PC-9 (cell line): ENCODE measurements at regions of chr10 and their contacts with region 1.

Region 1: GRCh38 chr10:44116474-44116873 is 268.4 kb downstream of the CXCL12 start:
- DNase-seq: no peak
- H3K4me3 ChIP-seq: no peak overlapping the region
- H3K27ac ChIP-seq: no peak overlapping the region
- H3K4me1 ChIP-seq: no peaks in the 10 kb centered on the region
- H3K27me3 ChIP-seq: no peaks in the 10 kb centered on the region
- CTCF ChIP-seq: no peak

Region 2: DNA sequence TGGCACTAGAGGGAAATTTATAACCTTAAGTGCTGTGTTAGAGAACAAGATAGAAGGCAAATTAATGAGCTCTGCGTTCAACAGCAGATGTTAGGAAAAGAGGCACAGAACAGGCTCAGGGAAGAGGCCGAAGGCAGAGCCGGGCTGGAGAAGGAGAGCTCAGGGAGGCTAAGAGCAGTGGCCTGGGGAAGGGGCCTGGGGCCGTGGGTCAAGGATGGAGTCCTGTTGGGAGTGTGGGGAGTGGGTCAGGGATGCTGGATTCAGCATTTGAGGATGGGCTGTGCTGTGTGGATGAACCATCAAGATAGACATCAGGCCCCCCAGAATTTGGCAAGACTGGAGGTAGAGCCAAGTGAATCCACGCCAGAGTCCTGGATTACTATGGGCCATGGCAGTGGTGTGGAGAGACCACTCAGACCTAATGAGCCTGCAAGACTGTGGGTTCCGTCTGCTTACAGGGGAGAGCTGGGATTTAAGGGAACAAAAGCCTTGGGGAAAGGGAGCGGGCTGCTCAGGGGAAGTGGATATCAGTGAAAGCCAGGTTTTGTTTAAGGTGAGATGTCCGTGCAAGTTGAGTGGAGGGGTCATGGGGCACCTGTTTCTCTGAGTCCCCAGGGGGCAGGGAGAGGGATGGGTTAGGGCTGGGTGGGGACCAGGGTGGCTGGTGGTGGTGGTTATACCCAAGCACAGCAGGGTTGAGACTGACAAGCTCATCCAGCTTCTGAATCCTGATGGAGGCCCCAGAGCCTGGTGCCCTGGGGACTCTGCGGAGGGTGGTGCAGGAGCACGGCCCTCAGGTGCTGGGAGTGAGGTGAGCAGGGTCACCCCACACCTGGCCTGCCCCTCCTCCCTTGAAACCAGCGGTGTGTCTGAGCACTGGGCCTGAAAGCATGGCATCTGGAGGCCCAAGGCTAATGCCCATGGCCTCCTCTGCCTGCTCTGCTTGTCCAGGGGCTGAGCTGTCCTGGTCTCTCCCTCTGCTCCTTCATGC is 1232.2 kb before region 1 on chr10:
- CTCF ChIA-PET with region 1: interaction called, 10 read pairs
- POLR2A ChIA-PET with region 1: no interaction called
- intact Hi-C with region 1: no loop called
- DNase-seq: no peak
- H3K4me3 ChIP-seq: no peak overlapping the region
- H3K27ac ChIP-seq: no peak overlapping the region
- H3K4me1 ChIP-seq: no peaks in the 10 kb centered on the region
- H3K27me3 ChIP-seq: peaks cover 26% of the 10 kb centered on the region
- CTCF ChIP-seq: no peak

Region 3: GRCh38 chr10:43959364-43960128 is 156.9 kb before region 1 on chr10:
- CTCF ChIA-PET with region 1: no interaction called
- POLR2A ChIA-PET with region 1: no interaction called
- intact Hi-C with region 1: no loop called
- DNase-seq: no peak
- H3K4me3 ChIP-seq: no peak overlapping the region
- H3K27ac ChIP-seq: no peak overlapping the region
- H3K4me1 ChIP-seq: no peaks in the 10 kb centered on the region
- H3K27me3 ChIP-seq: peaks cover 61% of the 10 kb centered on the region
- CTCF ChIP-seq: no peak